Right cardiac atrium (tissue), 5 donors: ENCODE measurements at regions of chr1 and their contacts with region 1.

Region 1: DNA sequence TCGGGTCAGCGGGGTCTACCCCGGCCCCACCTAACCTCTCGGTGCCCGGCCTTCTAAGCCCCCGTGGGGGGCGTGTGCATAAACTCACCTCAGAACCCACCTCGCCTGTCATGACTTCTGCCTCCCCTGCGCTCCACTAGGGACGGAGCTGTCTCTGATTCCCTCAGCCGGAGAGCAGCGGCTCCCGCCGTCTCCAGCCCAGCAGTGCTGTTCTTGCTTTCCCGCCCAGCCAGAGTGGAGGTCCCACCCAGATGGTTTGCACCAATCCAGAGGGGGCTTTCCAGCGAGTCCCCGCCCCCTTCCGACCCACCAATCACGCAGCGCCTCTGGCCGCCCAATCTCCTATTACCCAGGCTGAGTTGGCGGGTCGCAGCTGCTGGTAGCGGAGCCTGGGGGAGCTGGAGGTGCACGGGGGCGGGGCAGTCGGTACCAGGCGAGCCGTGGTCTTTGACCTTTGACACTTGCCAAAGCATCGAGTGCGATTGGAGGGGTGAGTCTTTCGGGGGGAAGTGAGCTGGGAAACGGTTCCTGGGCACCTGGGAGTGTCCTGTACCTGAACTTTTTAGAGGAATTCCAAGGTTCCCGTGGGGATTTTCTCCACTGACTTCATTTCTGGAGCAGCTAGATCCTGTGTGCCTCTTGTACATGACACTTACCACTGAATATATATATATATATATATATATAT is at the start of gene CLSPN:
- DNase-seq: peak; percentile 96 to 98 (median 97)
- ATAC-seq: peak; percentile 99
- H3K4me3 ChIP-seq: peak within 1 kb of the TSS; percentile 80
- H3K27ac ChIP-seq: peak within 1 kb of the TSS; percentile 95
- H3K4me1 ChIP-seq: no peaks in the 10 kb centered on the region
- H3K27me3 ChIP-seq: no peaks in the 10 kb centered on the region
- total RNA-seq, gene CLSPN: 0.22 to 1.8 (median 0.44) TPM

Region 2: GRCh38 chr1:35287807-35288640 is 481.9 kb before region 1 on chr1:
- intact Hi-C with region 1: no loop called
- DNase-seq: no peak
- ATAC-seq: peak in 1 of 2 donors; percentile 55
- H3K4me3 ChIP-seq: no peak overlapping the region
- H3K27ac ChIP-seq: no peak overlapping the region
- H3K4me1 ChIP-seq: no peaks in the 10 kb centered on the region
- H3K27me3 ChIP-seq: no peaks in the 10 kb centered on the region

Region 3: GRCh38 chr1:35577071-35577998 is 192.6 kb before region 1 on chr1:
- intact Hi-C with region 1: loop called in 1 of 4 experiments (anchors 10 kb)
- DNase-seq: peak; percentile 49 to 80 (median 76)
- ATAC-seq: peak; percentile 47 to 66
- H3K4me3 ChIP-seq: peak overlapping the region; percentile 55
- H3K27ac ChIP-seq: no peak overlapping the region
- H3K4me1 ChIP-seq: peaks cover 4% of the 10 kb centered on the region
- H3K27me3 ChIP-seq: no peaks in the 10 kb centered on the region

Region 4: GRCh38 chr1:35876988-35877387 is 107.1 kb after region 1 on chr1:
- intact Hi-C with region 1: no loop called
- DNase-seq: no peak
- ATAC-seq: no peak
- H3K4me3 ChIP-seq: no peak overlapping the region
- H3K27ac ChIP-seq: no peak overlapping the region
- H3K4me1 ChIP-seq: no peaks in the 10 kb centered on the region
- H3K27me3 ChIP-seq: no peaks in the 10 kb centered on the region